Activated CD8-positive, alpha-beta memory T cell treated with anti-CD3 and anti-CD28 coated beads, Interleukin-2, amount 10 ng/mL, durations not matched to agents 7 days and 5 days (primary cell): ENCODE measurements at regions of chr9 and their contacts with region 1.

Region 1: GRCh38 chr9:35102926-35103659 is at the start of gene STOML2:
- DNase-seq: peak; percentile 96
- ATAC-seq: peak; percentile 97
- H3K4me3 Mint-ChIP-seq: peak within 1 kb of the TSS; percentile 91
- H3K27ac Mint-ChIP-seq: peak within 1 kb of the TSS; percentile 95
- H3K4me1 Mint-ChIP-seq: peaks cover 43% of the 10 kb centered on the region
- H3K27me3 Mint-ChIP-seq: no peaks in the 10 kb centered on the region
- total RNA-seq, gene STOML2: 145 to 169 TPM

Region 2: GRCh38 chr9:35079426-35080341 is 23.4 kb before region 1 on chr9 and contains the start of gene FANCG:
- CTCF ChIA-PET with region 1: interaction called, 69 read pairs
- DNase-seq: peak; percentile 93
- ATAC-seq: peak; percentile 94
- H3K4me3 Mint-ChIP-seq: peak within 1 kb of the TSS; percentile 92
- H3K27ac Mint-ChIP-seq: peak within 1 kb of the TSS; percentile 97
- H3K4me1 Mint-ChIP-seq: peaks cover 37% of the 10 kb centered on the region
- H3K27me3 Mint-ChIP-seq: no peaks in the 10 kb centered on the region
- total RNA-seq, gene FANCG: 121 to 141 TPM

Region 3: DNA sequence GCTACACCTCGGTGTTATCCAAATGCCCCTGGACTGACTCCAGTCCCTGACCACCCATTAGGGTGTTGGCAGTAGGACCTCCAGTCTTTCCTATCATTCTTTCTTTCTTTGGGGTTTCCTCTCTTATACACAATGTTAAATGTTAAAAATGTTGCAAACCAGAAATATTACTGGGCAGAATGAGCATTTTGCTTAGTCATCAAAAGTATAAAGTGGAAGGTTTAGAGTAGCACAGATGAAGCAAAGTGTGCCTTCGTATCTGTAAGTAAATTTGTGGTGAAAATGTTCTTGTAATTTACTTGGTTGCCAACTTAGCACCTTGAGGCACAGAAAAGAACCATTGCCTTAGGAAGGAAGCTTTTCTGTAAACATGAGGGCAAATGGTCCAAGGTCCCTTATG is 37.0 kb after region 1 on chr9:
- CTCF ChIA-PET with region 1: no interaction called
- DNase-seq: no peak
- ATAC-seq: no peak
- H3K4me3 Mint-ChIP-seq: no peak overlapping the region
- H3K27ac Mint-ChIP-seq: no peak overlapping the region
- H3K4me1 Mint-ChIP-seq: no peaks in the 10 kb centered on the region
- H3K27me3 Mint-ChIP-seq: no peaks in the 10 kb centered on the region